ENCODE measurements at regions of chr1 and their contacts with region 1.

Region 1: DNA sequence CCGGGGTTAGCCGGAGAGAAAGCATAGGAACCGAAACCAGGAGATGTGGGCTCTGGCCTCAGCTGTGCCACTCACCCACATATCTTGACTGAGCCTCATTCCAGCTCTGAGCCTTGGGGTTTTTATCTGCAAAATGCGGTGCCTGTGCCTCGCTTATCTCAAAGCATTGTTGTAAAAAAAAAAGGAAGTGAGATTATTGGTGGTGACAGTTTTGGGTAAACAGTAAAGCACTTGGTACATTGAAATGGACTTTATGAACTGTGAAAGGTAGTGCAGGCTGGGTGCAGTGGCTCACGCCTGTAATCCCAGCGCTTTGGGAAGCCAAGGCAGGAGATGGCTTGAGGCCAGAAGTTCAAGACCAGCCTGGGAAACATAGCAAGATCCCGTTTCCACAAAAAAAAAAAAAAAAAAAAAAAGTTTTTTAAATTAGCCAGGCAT is 3.8 kb downstream of the PTAFR start:
- DNase-seq: peak; percentile 57 to 77 (median 67)
- H3K4me3 ChIP-seq: peak overlapping the region; percentile 4 to 97 (median 7)
- H3K4me3 Mint-ChIP-seq: peak overlapping the region; percentile 96 to 98
- H3K27ac ChIP-seq: peak overlapping the region; percentile 83 to 95
- H3K27ac Mint-ChIP-seq: peak overlapping the region; percentile 97 to 99 (median 98)
- H3K4me1 ChIP-seq: peaks cover 76 to 90% of the 10 kb centered on the region in 2 donors
- H3K4me1 Mint-ChIP-seq: peaks cover 85% of the 10 kb centered on the region
- H3K27me3 ChIP-seq: no peaks in the 10 kb centered on the region
- H3K27me3 Mint-ChIP-seq: peaks cover 0 to 8% (median 4%) of the 10 kb centered on the region in 3 donors
- CTCF ChIP-seq: no peak

Region 2: DNA sequence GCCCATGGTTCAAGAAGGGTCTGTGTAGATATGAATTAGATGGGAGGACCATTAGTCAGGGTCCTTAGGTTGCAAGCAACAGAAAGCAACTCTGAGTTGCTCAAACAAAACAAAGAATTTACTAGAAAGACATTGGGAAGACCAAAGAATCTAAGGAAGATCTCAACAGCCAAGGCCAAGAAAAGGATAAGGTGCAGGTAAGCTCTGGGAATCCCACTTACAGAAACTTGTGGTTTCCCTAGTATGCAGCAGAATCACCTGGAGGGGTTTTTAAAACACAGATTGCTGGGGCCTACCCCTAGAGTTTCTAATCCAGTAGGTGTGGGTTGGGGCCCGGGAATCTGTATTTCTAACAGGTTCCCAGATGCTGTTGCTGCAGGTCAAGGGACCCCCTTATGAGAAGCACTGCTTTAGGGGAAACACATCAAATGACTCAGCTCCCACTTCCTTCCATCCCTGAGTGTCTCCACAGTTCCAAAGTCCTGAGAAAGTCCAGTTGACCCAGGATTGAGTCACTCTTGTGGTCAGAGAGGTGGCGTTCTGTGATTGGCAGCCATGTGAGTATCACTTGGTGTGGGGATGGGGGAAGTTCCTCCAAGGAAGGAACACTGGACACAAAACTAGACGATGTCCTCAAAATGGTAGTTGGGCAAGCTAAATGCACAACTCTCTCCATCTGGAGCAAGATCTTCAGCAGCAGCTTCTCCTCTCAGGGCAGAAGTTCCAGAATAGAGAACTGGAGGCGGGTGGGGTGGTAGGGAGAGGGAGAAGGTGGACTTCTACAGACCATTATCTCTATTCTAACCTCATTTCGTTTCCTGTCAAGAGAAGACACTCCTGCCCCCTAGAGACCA is 60.1 kb before region 1 on chr1:
- intact Hi-C with region 1: loop called (anchors 1 to 5 kb)
- DNase-seq: peak; percentile 98 to 100 (median 99)
- H3K4me3 ChIP-seq: peak overlapping the region in 1 of 3 experiments; percentile 1
- H3K4me3 Mint-ChIP-seq: peak overlapping the region; percentile 12 to 33
- H3K27ac ChIP-seq: peak overlapping the region; percentile 87 to 100
- H3K27ac Mint-ChIP-seq: peak overlapping the region; percentile 98 to 100 (median 100)
- H3K4me1 ChIP-seq: peaks cover 77 to 86% of the 10 kb centered on the region in 2 donors
- H3K4me1 Mint-ChIP-seq: peaks cover 74% of the 10 kb centered on the region
- H3K27me3 ChIP-seq: no peaks in the 10 kb centered on the region
- H3K27me3 Mint-ChIP-seq: peaks cover 0 to 4% (median 4%) of the 10 kb centered on the region in 3 donors
- CTCF ChIP-seq: no peak

Region 3: GRCh38 chr1:28139025-28139712 is 33.6 kb before region 1 on chr1:
- intact Hi-C with region 1: loop called (anchors 5 kb)
- DNase-seq: peak; percentile 94 to 98 (median 98)
- H3K4me3 ChIP-seq: no peak overlapping the region
- H3K4me3 Mint-ChIP-seq: peak overlapping the region in 1 of 2 donors; percentile 44
- H3K27ac ChIP-seq: peak overlapping the region; percentile 72 to 84
- H3K27ac Mint-ChIP-seq: peak overlapping the region; percentile 96 to 100 (median 99)
- H3K4me1 ChIP-seq: peaks cover 74 to 86% of the 10 kb centered on the region in 2 donors
- H3K4me1 Mint-ChIP-seq: peaks cover 78% of the 10 kb centered on the region
- H3K27me3 ChIP-seq: no peaks in the 10 kb centered on the region
- H3K27me3 Mint-ChIP-seq: peaks cover 0 to 3% (median 1%) of the 10 kb centered on the region in 3 donors
- CTCF ChIP-seq: no peak

Region 4: DNA sequence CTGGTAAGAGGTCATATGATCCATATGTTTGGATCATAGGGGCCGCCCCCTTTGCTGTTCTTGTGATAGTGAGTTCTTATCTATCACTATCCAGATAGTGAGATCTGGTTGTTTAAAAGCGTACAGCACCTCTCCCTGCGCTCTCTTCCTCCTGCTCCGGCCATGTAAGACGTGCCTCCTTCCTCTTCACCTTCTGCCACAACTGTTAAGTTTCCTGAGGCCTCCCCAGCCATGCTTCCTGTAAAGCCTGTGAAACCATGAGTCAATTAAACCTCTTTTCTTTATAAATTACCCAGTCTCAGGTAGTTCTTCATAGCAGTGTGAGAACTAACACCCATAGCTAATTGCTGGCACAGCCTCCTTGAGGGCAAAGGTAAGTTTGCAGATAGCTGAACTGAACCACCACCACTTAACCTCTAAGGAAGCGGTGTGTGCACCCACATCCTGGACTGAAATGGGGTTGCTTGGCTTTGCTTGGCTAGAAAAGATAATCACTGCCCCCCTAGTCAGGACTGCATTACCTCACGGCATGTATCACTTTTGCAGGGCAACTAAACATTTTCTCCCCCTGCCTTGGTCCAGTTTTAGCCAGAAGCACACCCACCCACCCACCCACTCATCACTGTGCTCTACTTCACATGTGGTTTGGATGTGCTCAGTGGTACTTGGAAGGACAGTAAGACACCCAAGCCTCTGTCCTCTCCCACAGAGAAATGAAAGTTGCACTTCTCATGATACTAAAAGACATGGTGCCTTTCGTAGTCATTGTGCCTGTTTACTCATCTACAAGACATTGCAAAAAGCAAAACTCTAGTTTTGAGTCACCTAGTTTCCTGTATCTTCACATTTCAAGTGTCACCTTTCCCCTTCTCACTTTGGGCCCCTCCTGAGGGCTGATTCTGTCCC is 26.8 kb after region 1 on chr1:
- intact Hi-C with region 1: no loop called
- DNase-seq: no peak
- H3K4me3 ChIP-seq: no peak overlapping the region
- H3K4me3 Mint-ChIP-seq: no peak overlapping the region
- H3K27ac ChIP-seq: no peak overlapping the region
- H3K27ac Mint-ChIP-seq: peak overlapping the region in 3 of 7 donors; percentile 46 to 54 (median 54)
- H3K4me1 ChIP-seq: peaks cover 0 to 6% of the 10 kb centered on the region in 2 donors
- H3K4me1 Mint-ChIP-seq: peaks cover 13% of the 10 kb centered on the region
- H3K27me3 ChIP-seq: no peaks in the 10 kb centered on the region
- H3K27me3 Mint-ChIP-seq: peaks cover 0 to 3% (median 2%) of the 10 kb centered on the region in 3 donors
- CTCF ChIP-seq: no peak

Measured in CD14-positive monocyte (primary cell).